Activated T-helper 1 cell treated with anti-CD3 and anti-CD28 coated beads, Interleukin-12 subunit alpha, Interleukin-12 subunit beta, Interleukin-2, Interleukin-4 antibody, amounts not matched to agents 30 ng/mL and 10 ng/mL and 1 ng/mL, durations not matched to agents 14 hours and 24 hours and 36 hours (primary cell): ENCODE measurements at regions of chr1 and their contacts with region 1.

Region 1: GRCh38 chr1:28248283-28249012 is 10.9 kb upstream of the SESN2 start:
- DNase-seq: peak; percentile 75
- H3K4me3 Mint-ChIP-seq: peak overlapping the region; percentile 84
- H3K27ac Mint-ChIP-seq: peak overlapping the region; percentile 95
- H3K4me1 Mint-ChIP-seq: peaks cover 54% of the 10 kb centered on the region
- H3K27me3 Mint-ChIP-seq: no peaks in the 10 kb centered on the region

Region 2: DNA sequence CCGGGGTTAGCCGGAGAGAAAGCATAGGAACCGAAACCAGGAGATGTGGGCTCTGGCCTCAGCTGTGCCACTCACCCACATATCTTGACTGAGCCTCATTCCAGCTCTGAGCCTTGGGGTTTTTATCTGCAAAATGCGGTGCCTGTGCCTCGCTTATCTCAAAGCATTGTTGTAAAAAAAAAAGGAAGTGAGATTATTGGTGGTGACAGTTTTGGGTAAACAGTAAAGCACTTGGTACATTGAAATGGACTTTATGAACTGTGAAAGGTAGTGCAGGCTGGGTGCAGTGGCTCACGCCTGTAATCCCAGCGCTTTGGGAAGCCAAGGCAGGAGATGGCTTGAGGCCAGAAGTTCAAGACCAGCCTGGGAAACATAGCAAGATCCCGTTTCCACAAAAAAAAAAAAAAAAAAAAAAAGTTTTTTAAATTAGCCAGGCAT is 75.7 kb before region 1 on chr1:
- intact Hi-C with region 1: loop called (anchors 2 kb)
- DNase-seq: peak; percentile 51
- H3K4me3 Mint-ChIP-seq: peak overlapping the region; percentile 40
- H3K27ac Mint-ChIP-seq: peak overlapping the region; percentile 37
- H3K4me1 Mint-ChIP-seq: peaks cover 59% of the 10 kb centered on the region
- H3K27me3 Mint-ChIP-seq: peaks cover 45% of the 10 kb centered on the region

Region 3: GRCh38 chr1:28259307-28260167 is 11.1 kb after region 1 on chr1 and contains the start of gene SESN2:
- intact Hi-C with region 1: loop called (anchors 1 kb)
- DNase-seq: peak; percentile 99
- H3K4me3 Mint-ChIP-seq: peak within 1 kb of the TSS; percentile 82
- H3K27ac Mint-ChIP-seq: peak within 1 kb of the TSS; percentile 90
- H3K4me1 Mint-ChIP-seq: peaks cover 51% of the 10 kb centered on the region
- H3K27me3 Mint-ChIP-seq: no peaks in the 10 kb centered on the region
- total RNA-seq, gene SESN2: 18.7 and 19.3 TPM in 2 replicates

Region 4: DNA sequence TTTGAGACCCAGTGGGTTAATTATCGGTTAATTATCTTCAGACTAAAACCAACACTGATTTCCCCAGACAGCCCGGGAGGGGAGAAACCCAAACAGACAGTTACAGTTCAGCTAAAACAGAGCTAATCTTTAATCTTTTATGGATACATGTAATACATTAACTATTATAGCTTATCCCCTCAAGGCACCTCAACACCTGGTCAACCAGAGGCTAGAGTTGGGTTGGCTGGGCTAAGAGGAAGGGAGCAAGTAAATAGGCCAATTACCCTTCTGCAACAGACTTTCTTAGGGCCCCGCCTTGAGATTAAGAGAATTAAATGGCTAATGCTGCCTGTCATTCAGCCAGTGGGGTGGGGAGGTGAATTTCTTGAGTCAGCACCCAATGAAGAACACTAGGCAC is 73.7 kb after region 1 on chr1:
- intact Hi-C with region 1: no loop called
- DNase-seq: no peak
- H3K4me3 Mint-ChIP-seq: no peak overlapping the region
- H3K27ac Mint-ChIP-seq: no peak overlapping the region
- H3K4me1 Mint-ChIP-seq: no peaks in the 10 kb centered on the region
- H3K27me3 Mint-ChIP-seq: peaks cover 5% of the 10 kb centered on the region

Region 5: DNA sequence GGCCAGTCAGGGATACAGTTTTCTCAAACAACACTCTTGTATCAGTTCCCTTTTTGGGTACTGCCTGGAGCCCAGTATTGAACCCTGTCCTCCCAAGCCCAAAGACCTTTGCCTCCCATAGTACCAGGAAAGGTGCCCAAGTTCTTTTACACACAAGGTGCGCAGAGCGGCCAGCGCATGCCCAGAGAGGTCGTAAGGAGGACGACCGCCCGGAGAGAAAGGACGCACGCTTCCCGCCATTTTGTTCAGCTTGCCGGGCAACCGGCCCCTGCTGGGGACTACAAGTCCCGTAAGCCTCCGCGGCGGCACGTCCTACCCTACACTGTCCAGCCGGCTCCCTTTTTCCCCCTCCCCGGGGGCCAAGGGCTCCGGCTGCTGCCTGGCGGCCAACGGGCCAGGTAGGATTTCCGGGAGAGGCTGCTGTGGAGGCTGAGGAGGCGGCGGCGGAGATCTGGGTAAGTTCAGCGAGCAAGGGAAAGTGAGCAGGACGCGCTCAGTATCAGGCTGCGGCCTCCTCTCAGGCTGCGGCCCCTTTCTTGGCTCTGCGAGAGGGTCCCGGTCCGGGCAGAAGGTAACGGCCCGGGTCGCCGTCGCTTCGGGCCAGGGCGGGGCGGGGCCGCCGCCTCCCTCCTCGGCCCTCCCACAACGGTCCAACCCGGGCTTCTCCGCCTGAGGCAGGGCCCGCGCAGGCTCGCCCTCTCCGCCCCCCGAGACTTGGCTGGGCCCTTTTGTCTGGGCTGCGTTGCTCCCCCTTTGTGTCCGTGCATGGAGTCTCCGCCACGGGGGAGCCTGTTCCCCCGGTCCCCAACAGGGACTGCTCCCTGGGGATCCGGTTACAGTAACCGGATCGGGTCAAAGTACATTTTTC is 121.2 kb after region 1 on chr1 and contains the start of gene PHACTR4:
- intact Hi-C with region 1: loop called (anchors 1 kb)
- DNase-seq: peak; percentile 78
- H3K4me3 Mint-ChIP-seq: peak within 1 kb of the TSS; percentile 91
- H3K27ac Mint-ChIP-seq: peak within 1 kb of the TSS; percentile 95
- H3K4me1 Mint-ChIP-seq: peaks cover 36% of the 10 kb centered on the region
- H3K27me3 Mint-ChIP-seq: peaks cover 3% of the 10 kb centered on the region
- total RNA-seq, gene PHACTR4: 28.9 and 31.8 TPM in 2 replicates

Region 6: GRCh38 chr1:28552758-28553663 is 304.6 kb after region 1 on chr1 and contains the start of gene TRNAU1AP:
- intact Hi-C with region 1: loop called (anchors 5 kb)
- DNase-seq: peak; percentile 98
- H3K4me3 Mint-ChIP-seq: peak within 1 kb of the TSS; percentile 99
- H3K27ac Mint-ChIP-seq: peak within 1 kb of the TSS; percentile 97
- H3K4me1 Mint-ChIP-seq: peaks cover 18% of the 10 kb centered on the region
- H3K27me3 Mint-ChIP-seq: no peaks in the 10 kb centered on the region
- total RNA-seq, gene TRNAU1AP: 40.2 and 41.0 TPM in 2 replicates

Region 7: DNA sequence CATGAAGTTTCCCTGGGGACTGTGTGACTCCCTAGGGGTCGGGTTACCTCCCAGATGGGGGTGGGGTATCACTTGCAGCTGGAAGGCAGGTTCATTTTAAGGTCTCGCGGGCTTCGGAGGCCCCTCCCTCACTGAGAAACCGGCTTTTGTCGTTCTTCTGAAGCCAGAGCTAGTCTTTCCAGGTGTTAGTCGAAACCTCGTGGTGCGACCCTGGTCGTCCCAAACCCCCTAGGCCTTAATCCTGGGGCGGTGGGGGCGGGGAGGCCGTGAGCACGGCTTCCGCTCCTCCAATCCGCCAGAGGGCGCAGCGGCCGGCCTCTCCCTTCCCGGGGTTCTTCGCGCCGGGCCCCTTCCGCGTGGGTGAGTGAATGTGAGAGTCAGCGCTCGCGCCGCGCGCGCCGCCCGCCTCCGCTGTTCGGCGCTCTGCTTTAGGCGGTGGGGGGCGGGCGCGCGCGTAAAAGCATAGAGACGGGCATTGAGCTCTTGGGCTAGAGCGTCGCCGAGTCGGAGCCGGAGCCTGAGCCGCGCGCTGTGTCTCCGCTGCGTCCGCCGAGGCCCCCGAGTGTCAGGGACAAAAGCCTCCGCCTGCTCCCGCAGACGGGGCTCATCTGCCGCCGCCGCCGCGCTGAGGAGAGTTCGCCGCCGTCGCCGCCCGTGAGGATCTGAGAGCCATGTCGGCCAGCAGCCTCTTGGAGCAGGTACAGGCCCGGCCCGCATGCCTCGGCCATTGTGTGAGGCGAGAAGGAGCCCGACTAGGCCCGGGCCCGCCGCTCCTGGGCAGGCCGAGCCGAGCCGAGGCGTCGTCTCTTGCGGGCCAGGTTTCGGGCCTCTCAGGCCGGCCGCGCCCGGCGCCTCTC is 488.2 kb after region 1 on chr1 and contains the start of gene YTHDF2:
- intact Hi-C with region 1: loop called (anchors 2 kb)
- DNase-seq: peak; percentile 96
- H3K4me3 Mint-ChIP-seq: peak within 1 kb of the TSS; percentile 96
- H3K27ac Mint-ChIP-seq: peak within 1 kb of the TSS; percentile 93
- H3K4me1 Mint-ChIP-seq: peaks cover 27% of the 10 kb centered on the region
- H3K27me3 Mint-ChIP-seq: no peaks in the 10 kb centered on the region
- total RNA-seq, gene YTHDF2: 91.7 and 94.9 TPM in 2 replicates